Psoas muscle (tissue), 8 donors: ENCODE measurements at regions of chr6 and their contacts with region 1.

Region 1: DNA sequence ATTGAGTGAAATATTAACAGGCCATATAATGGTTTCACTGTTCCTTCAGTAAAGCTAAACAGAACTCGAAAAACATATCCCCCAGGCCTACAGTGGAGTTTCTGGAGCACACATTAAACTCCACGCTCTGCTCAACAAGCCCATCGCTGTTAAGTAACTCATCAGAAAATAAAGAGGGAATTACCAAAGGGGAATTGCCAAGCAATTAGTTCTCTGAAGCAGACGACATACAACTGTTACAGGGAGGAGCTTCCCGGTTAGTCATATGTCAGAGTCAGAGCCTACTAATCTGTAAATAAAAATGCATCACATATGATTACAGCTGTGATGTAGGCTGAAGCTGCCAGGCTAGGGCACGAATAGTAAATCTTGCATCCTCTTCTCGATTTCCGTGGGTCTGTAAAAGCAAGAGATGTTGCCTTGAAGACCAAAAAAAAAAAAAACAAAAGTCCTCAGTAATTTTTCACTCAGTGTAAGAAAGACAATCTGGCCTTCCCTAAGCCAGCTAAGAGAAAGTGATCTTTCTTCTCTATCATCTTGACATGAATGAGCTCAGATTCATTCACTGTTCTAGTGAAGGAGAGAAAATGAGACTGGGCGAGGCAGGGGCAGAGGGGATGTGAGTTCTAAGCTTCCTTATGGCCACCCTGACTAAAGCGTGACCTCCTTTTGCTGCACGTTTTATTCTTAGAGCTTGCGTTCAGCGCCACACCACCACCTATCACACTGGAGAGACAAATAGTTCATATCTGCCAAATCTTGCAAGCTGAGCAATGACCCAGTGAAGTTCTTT is 13.8 kb downstream of the ATXN1 start:
- DNase-seq: no peak
- ATAC-seq: peak; percentile 63 to 88 (median 84)
- H3K4me3 ChIP-seq: no peak overlapping the region
- H3K27ac ChIP-seq: peak overlapping the region; percentile 78
- H3K4me1 ChIP-seq: peaks cover 67% of the 10 kb centered on the region
- H3K27me3 ChIP-seq: no peaks in the 10 kb centered on the region
- CTCF ChIP-seq: no peak

Region 2: DNA sequence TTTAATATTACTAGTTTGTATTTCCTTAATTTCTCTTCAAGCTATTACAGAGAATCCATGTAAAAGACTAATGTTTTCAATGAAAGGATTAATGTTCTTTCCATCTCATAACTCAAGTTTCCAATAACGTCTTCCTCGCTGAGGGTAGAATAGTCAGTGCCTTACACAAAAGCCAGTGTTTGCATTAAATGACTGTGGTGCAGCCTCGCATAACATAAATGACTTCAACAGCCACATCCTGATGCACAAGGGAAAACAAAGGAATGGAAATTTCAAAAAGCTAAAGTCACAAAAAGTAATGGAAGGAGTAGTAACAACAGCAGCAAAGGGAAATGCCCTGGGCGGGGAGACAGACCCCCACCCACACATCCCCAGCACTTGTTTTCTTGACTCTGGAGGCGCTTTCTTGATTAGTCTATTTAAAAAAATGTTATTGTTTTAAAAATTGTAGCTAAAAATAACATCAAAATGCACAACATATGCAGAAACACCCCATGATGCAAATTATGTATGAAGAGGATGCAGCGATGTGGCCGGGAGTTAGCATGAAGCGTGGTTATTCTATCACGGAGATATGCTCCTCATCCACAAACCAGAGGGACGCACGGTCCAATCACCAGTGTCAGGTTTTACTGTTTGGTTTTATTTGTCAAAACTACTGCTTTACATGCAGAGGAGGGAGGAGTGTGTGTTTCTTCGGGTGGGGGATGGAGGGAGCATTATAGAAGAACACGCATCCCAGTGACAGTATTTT is 280.5 kb before region 1 on chr6:
- intact Hi-C with region 1: no loop called
- DNase-seq: no peak
- ATAC-seq: no peak
- H3K4me3 ChIP-seq: no peak overlapping the region
- H3K27ac ChIP-seq: no peak overlapping the region
- H3K4me1 ChIP-seq: no peaks in the 10 kb centered on the region
- H3K27me3 ChIP-seq: no peaks in the 10 kb centered on the region
- CTCF ChIP-seq: no peak

Region 3: GRCh38 chr6:16684896-16685554 is 62.4 kb before region 1 on chr6:
- intact Hi-C with region 1: loop called in 1 of 2 experiments (anchors 5 kb)
- DNase-seq: no peak
- ATAC-seq: no peak
- H3K4me3 ChIP-seq: no peak overlapping the region
- H3K27ac ChIP-seq: no peak overlapping the region
- H3K4me1 ChIP-seq: peaks cover 67% of the 10 kb centered on the region
- H3K27me3 ChIP-seq: no peaks in the 10 kb centered on the region
- CTCF ChIP-seq: no peak